ENCODE measurements at regions of chr15 and their contacts with region 1.

Region 1: DNA sequence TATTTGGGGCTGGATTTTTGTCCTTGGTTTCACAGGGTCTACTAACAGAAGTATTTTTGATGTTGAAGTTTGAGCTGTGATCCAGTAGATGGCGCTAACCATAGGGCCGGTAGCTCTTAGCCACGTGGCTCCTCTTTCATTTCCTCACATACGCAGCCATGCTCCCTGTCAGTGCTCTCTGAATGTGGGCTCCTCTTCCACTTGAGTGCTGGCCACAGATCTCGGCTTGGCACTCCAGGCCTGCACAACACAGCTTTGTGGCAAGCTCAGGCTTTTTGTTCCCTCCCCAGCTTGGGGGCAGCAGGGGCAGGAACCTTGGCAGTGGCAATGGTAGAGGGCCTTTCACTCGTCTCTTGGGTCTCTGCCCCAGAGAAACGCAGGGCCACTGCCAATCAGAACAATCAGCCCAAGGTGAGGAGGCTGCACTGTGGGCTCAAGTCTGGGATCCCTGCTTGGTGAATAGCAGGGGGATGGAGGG is 18.6 kb upstream of the DNAAF4 start:
- DNase-seq: peak in 1 of 2 experiments; percentile 32
- H3K4me3 ChIP-seq: no peak overlapping the region
- H3K4me3 Mint-ChIP-seq: no peak overlapping the region
- H3K27ac Mint-ChIP-seq: no peak overlapping the region
- H3K4me1 ChIP-seq: no peaks in the 10 kb centered on the region
- H3K4me1 Mint-ChIP-seq: no peaks in the 10 kb centered on the region
- H3K27me3 ChIP-seq: no peaks in the 10 kb centered on the region
- H3K27me3 Mint-ChIP-seq: no peaks in the 10 kb centered on the region
- CTCF ChIP-seq: peak; percentile 61 to 63

Region 2: GRCh38 chr15:55588070-55588814 is 61.6 kb after region 1 on chr15 and contains the start of gene PYGO1:
- CTCF ChIA-PET with region 1: no interaction called
- POLR2A ChIA-PET with region 1: no interaction called
- intact Hi-C with region 1: loop called (anchors 5 kb)
- DNase-seq: peak; percentile 72 to 78
- H3K4me3 ChIP-seq: peak within 1 kb of the TSS; percentile 67
- H3K4me3 Mint-ChIP-seq: no peak within 1 kb of the TSS
- H3K27ac Mint-ChIP-seq: peak within 1 kb of the TSS; percentile 56
- H3K4me1 ChIP-seq: no peaks in the 10 kb centered on the region
- H3K4me1 Mint-ChIP-seq: peaks cover 5% of the 10 kb centered on the region
- H3K27me3 ChIP-seq: no peaks in the 10 kb centered on the region
- H3K27me3 Mint-ChIP-seq: peaks cover 3% of the 10 kb centered on the region
- CTCF ChIP-seq: peak in 1 of 2 experiments; percentile 18
- total RNA-seq, gene PYGO1: 7.8 and 8.9 TPM in 2 replicates

Region 3: DNA sequence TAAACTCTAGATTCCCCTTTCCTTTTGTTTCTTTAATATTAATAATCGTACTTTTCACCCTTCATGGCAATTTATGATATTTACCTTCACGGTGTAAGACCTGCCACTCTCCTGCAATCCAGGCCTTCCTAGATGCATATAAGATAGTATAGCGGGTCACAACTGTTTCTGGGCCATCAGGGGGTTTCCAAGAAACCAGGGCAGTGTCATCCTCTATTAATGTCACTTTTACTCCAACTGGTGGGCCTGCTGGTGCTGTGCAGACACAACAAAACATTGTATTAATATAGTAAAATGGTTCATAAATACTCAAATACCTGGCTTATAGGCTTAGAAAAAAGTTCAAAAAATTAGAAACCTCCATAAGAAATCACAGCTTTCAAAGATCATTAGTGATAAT is 110.5 kb after region 1 on chr15:
- CTCF ChIA-PET with region 1: interaction called, 8 read pairs
- POLR2A ChIA-PET with region 1: no interaction called
- intact Hi-C with region 1: loop called (anchors 1 kb)
- DNase-seq: no peak
- H3K4me3 ChIP-seq: no peak overlapping the region
- H3K4me3 Mint-ChIP-seq: no peak overlapping the region
- H3K27ac Mint-ChIP-seq: no peak overlapping the region
- H3K4me1 ChIP-seq: no peaks in the 10 kb centered on the region
- H3K4me1 Mint-ChIP-seq: no peaks in the 10 kb centered on the region
- H3K27me3 ChIP-seq: no peaks in the 10 kb centered on the region
- H3K27me3 Mint-ChIP-seq: no peaks in the 10 kb centered on the region
- CTCF ChIP-seq: no peak

Measured in Caco-2 (cell line).